PC-3 (cell line): ENCODE measurements at regions of chr1 and their contacts with region 1.

Region 1: GRCh38 chr1:64042331-64043100 is 160.9 kb upstream of the UBE2U start:
- DNase-seq: peak; percentile 96
- ATAC-seq: peak; percentile 55
- H3K4me3 ChIP-seq: peak overlapping the region; percentile 42; the same call in 1 of the 2 replicates
- H3K27ac ChIP-seq: peak overlapping the region; percentile 81
- H3K4me1 ChIP-seq: peaks cover 63% of the 10 kb centered on the region
- H3K27me3 ChIP-seq: no peaks in the 10 kb centered on the region
- CTCF ChIP-seq: peak; percentile 16; the same call in 1 of the 2 replicates

Region 2: GRCh38 chr1:64072089-64072793 is 29.7 kb after region 1 on chr1:
- CTCF ChIA-PET with region 1: no interaction called
- POLR2A ChIA-PET with region 1: no interaction called
- intact Hi-C with region 1: loop called (anchors 1 kb)
- DNase-seq: peak; percentile 50
- ATAC-seq: peak; percentile 67
- H3K4me3 ChIP-seq: no peak overlapping the region
- H3K27ac ChIP-seq: peak overlapping the region; percentile 71
- H3K4me1 ChIP-seq: peaks cover 16% of the 10 kb centered on the region
- H3K27me3 ChIP-seq: no peaks in the 10 kb centered on the region
- CTCF ChIP-seq: no peak

Region 3: DNA sequence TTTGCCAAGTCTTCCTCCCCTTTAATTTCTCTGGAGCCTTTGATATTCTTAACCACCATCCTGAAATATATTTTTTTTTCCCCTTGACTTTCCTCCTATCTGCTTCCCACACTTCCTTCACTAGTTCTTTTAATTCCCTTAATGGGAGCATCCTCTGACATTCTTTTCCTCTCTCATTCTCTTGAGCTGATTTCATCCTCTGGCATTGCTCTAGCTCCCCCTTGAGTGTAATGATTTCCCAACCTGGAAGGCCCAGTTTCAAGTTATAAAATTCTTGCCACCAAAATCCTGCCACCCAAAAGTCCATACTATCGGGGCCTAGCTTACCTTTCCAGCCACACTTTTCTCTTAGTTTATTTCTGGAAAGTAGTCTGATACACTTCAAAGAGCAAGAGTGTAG is 121.5 kb after region 1 on chr1:
- CTCF ChIA-PET with region 1: no interaction called
- POLR2A ChIA-PET with region 1: no interaction called
- intact Hi-C with region 1: no loop called
- DNase-seq: peak; percentile 44
- ATAC-seq: peak; percentile 61; the same call in 1 of the 2 replicates
- H3K4me3 ChIP-seq: no peak overlapping the region
- H3K27ac ChIP-seq: no peak overlapping the region
- H3K4me1 ChIP-seq: no peaks in the 10 kb centered on the region
- H3K27me3 ChIP-seq: no peaks in the 10 kb centered on the region
- CTCF ChIP-seq: peak; percentile 74